CD4-positive, alpha-beta memory T cell (primary cell): ENCODE measurements at regions of chr5 and their contacts with region 1.

Region 1: GRCh38 chr5:180802325-180803180 is at the start of gene MGAT1:
- DNase-seq: peak; percentile 60 to 77 (median 66)
- H3K4me3 ChIP-seq: peak within 1 kb of the TSS; percentile 38 to 84
- H3K4me3 Mint-ChIP-seq: peak within 1 kb of the TSS; percentile 87 to 99 (median 96)
- H3K27ac ChIP-seq: peak within 1 kb of the TSS; percentile 87
- H3K27ac Mint-ChIP-seq: peak within 1 kb of the TSS; percentile 92 to 98 (median 95)
- H3K4me1 ChIP-seq: peaks cover 82% of the 10 kb centered on the region
- H3K4me1 Mint-ChIP-seq: peaks cover 66 to 93% (median 77%) of the 10 kb centered on the region in 4 donors
- H3K27me3 ChIP-seq: no peaks in the 10 kb centered on the region
- H3K27me3 Mint-ChIP-seq: no peaks in the 10 kb centered on the region
- total RNA-seq, gene MGAT1: 187 TPM

Region 2: GRCh38 chr5:180494060-180494509 is 308.5 kb before region 1 on chr5 and contains the start of gene CNOT6:
- CTCF ChIA-PET with region 1: no interaction called
- POLR2A ChIA-PET with region 1: no interaction called
- intact Hi-C with region 1: loop called (anchors 2 kb)
- DNase-seq: peak; percentile 92 to 97 (median 96)
- H3K4me3 ChIP-seq: peak within 1 kb of the TSS; percentile 17 to 72
- H3K4me3 Mint-ChIP-seq: peak within 1 kb of the TSS; percentile 91 to 98 (median 94)
- H3K27ac ChIP-seq: peak within 1 kb of the TSS; percentile 84
- H3K27ac Mint-ChIP-seq: peak within 1 kb of the TSS; percentile 91 to 99 (median 96)
- H3K4me1 ChIP-seq: peaks cover 42% of the 10 kb centered on the region
- H3K4me1 Mint-ChIP-seq: peaks cover 24 to 46% (median 38%) of the 10 kb centered on the region in 4 donors
- H3K27me3 ChIP-seq: no peaks in the 10 kb centered on the region
- H3K27me3 Mint-ChIP-seq: no peaks in the 10 kb centered on the region
- total RNA-seq, gene CNOT6: 30.1 to 37.8 TPM

Region 3: GRCh38 chr5:180784497-180785097 is 18.0 kb before region 1 on chr5:
- CTCF ChIA-PET with region 1: interaction called, 34 read pairs
- POLR2A ChIA-PET with region 1: interaction called, 8 read pairs
- intact Hi-C with region 1: loop called (anchors 1 kb)
- DNase-seq: peak; percentile 68 to 81 (median 72)
- H3K4me3 ChIP-seq: no peak overlapping the region
- H3K4me3 Mint-ChIP-seq: no peak overlapping the region
- H3K27ac ChIP-seq: no peak overlapping the region
- H3K27ac Mint-ChIP-seq: peak overlapping the region in 2 of 7 donors; percentile 6 to 14
- H3K4me1 ChIP-seq: peaks cover 8% of the 10 kb centered on the region
- H3K4me1 Mint-ChIP-seq: peaks cover 10 to 25% (median 18%) of the 10 kb centered on the region in 4 donors
- H3K27me3 ChIP-seq: no peaks in the 10 kb centered on the region
- H3K27me3 Mint-ChIP-seq: no peaks in the 10 kb centered on the region

Region 4: DNA sequence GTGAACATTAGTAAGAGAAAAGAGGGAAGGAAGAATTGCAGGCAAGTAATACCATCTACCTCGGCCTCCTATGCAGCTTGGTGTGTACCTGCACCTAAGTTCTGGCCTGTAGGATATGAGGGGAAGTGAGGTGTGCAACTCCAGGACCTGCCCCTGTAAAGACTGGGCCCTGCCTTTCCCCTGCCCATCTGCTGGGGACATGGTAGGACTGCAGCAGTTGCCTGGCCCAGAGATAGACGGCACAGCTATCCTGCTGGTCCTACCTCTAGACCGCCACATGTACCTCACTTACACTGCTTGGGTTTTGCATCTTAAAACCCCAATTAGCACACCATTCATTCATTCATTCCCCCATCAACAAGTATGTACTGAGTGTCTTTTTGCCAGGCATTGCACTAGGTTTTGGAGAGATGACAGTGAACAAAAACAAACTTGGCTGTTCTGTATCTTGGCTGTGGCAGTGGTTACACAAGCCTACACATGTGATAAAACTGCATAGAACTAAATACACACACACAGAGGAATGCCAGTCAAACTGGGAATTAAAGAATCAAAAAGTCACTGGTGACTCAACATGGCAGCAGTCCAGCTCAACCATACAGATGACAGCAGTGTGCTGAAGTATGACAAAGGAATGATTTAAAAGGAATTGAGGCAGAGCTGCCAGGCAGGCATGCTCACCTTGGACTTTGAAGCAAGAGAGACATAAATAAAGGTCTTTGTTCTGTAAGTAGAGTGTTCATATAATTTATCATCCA is 23.4 kb after region 1 on chr5:
- CTCF ChIA-PET with region 1: interaction called, 109 read pairs
- POLR2A ChIA-PET with region 1: interaction called, 271 read pairs
- intact Hi-C with region 1: loop called (anchors 1 kb)
- DNase-seq: no peak
- H3K4me3 ChIP-seq: no peak overlapping the region
- H3K4me3 Mint-ChIP-seq: no peak overlapping the region
- H3K27ac ChIP-seq: no peak overlapping the region
- H3K27ac Mint-ChIP-seq: peak overlapping the region in 3 of 7 donors; percentile 41 to 53 (median 47)
- H3K4me1 ChIP-seq: peaks cover 22% of the 10 kb centered on the region
- H3K4me1 Mint-ChIP-seq: peaks cover 19 to 46% (median 26%) of the 10 kb centered on the region in 4 donors
- H3K27me3 ChIP-seq: no peaks in the 10 kb centered on the region
- H3K27me3 Mint-ChIP-seq: no peaks in the 10 kb centered on the region

Region 5: DNA sequence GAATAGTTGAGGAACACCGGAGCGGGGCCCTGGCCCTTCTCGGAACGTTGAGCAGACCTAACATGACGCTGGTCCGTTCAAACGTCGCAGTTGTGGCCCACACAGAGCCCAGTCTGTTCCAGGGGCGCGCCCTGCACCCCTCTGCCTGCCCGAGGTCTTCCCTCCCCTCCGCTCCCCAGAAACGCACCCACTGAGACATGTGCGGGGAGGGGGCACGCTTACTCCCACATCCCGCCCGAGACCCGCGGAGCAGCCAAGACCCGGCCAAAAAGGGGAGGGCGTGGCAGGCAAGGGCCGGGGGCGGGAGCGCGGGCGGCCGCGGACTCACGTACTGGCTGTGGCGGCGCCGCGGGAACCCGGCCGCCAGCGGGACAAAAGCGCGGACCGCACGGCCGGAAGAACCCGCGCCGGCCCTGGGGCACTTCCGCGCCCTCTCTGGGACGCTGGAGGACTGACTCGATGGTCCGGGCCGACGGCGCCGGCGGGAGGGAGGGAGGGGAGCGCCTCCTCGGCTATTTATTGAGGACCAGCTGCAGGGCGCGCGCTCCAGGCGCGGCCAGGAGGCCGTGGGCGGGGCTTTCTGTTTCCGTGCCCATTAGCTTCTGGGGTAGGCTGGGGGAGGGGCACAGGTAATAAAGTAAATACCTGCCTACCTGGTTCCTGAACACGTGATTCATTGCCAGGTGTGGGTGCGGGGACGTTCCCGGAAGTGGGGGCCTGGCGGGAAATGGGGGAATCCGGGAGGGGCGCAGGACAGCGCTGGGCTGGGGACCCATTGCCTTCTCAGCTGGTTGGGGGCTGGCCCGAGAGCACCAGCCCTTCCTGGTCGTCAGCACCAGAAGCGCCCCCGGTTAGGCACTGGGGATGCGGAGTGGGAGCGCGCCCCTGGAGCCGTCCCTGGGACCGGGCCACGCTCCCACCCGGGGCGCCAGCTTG is 58.6 kb after region 1 on chr5 and contains the start of gene ZFP62:
- CTCF ChIA-PET with region 1: interaction called, 6 read pairs
- POLR2A ChIA-PET with region 1: interaction called, 66 read pairs
- intact Hi-C with region 1: loop called (anchors 1 kb)
- DNase-seq: peak; percentile 86 to 89 (median 86)
- H3K4me3 ChIP-seq: peak within 1 kb of the TSS; percentile 36 to 96
- H3K4me3 Mint-ChIP-seq: peak within 1 kb of the TSS; percentile 90 to 95 (median 92)
- H3K27ac ChIP-seq: peak within 1 kb of the TSS; percentile 67
- H3K27ac Mint-ChIP-seq: peak within 1 kb of the TSS; percentile 96 to 98 (median 97)
- H3K4me1 ChIP-seq: peaks cover 9% of the 10 kb centered on the region
- H3K4me1 Mint-ChIP-seq: peaks cover 13 to 31% (median 19%) of the 10 kb centered on the region in 4 donors
- H3K27me3 ChIP-seq: no peaks in the 10 kb centered on the region
- H3K27me3 Mint-ChIP-seq: peaks cover 0 to 2% of the 10 kb centered on the region in 2 donors
- total RNA-seq, gene ZFP62: 71.1 to 71.7 TPM

Region 6: DNA sequence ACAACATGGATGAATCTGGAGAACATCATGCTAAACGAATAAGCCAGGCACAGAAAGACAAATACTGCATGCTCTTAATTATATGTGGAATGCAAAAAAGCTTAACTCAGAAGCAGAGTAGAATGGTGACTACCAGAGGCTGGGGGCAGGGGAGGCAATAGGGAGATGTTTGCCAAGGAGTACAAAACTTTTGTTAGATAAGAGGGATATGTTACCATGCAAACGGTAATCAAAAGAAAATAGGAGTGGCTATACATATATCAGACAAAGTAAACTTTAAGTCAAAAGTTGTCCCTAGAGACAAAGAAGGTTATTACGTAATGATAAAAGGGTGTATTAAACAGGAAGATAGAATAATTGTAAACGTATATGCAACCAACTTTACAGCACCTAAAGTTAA is 168.3 kb after region 1 on chr5:
- CTCF ChIA-PET with region 1: no interaction called
- POLR2A ChIA-PET with region 1: no interaction called
- intact Hi-C with region 1: no loop called
- DNase-seq: no peak
- H3K4me3 ChIP-seq: no peak overlapping the region
- H3K4me3 Mint-ChIP-seq: no peak overlapping the region
- H3K27ac ChIP-seq: no peak overlapping the region
- H3K27ac Mint-ChIP-seq: no peak overlapping the region
- H3K4me1 ChIP-seq: no peaks in the 10 kb centered on the region
- H3K4me1 Mint-ChIP-seq: no peaks in the 10 kb centered on the region
- H3K27me3 ChIP-seq: no peaks in the 10 kb centered on the region
- H3K27me3 Mint-ChIP-seq: peaks cover 2 to 8% of the 10 kb centered on the region in 2 donors

Region 7: DNA sequence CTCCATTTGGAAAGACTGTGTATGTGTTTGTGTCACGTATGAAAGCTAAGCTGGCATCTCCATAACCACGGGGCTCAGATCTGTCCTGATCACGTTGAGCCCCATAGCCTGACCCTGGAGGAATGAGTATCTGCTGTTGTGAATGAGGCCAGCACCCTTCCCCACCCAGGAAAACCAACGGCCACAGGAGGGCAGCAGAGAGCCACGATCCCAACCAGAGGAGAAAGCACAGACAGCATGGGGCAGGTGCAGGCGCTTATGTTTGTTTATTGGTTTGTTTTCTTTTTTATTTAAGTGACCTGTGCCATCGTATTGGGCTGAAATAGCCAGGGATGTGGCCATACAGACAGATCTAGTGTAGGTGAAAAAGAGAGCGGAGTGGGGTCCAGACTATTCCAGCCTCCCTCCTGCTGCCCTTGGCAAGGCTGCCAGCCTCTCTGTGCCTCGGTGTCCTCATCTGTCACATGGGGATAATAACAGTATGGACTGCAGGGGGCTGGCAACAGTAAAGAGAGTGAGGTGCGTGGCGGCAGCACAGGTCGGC is 356.8 kb after region 1 on chr5:
- CTCF ChIA-PET with region 1: no interaction called
- POLR2A ChIA-PET with region 1: interaction called, 3 read pairs
- intact Hi-C with region 1: loop called (anchors 5 kb)
- DNase-seq: peak; percentile 82 to 89 (median 87)
- H3K4me3 ChIP-seq: no peak overlapping the region
- H3K4me3 Mint-ChIP-seq: peak overlapping the region; percentile 74 to 89 (median 82)
- H3K27ac ChIP-seq: peak overlapping the region; percentile 90
- H3K27ac Mint-ChIP-seq: peak overlapping the region; percentile 92 to 99 (median 97)
- H3K4me1 ChIP-seq: peaks cover 23% of the 10 kb centered on the region
- H3K4me1 Mint-ChIP-seq: peaks cover 12 to 35% (median 21%) of the 10 kb centered on the region in 4 donors
- H3K27me3 ChIP-seq: peaks cover 2% of the 10 kb centered on the region
- H3K27me3 Mint-ChIP-seq: peaks cover 7 to 26% of the 10 kb centered on the region in 2 donors